Right lobe of liver (tissue), 6 donors: ENCODE measurements at regions of chr9 and their contacts with region 1.

Region 1: GRCh38 chr9:127503947-127504782 is 52.9 kb downstream of the LRSAM1 start:
- DNase-seq: peak; percentile 83 to 84 (median 83)
- ATAC-seq: peak; percentile 83 to 93 (median 86)
- H3K4me3 ChIP-seq: no peak overlapping the region
- H3K27ac ChIP-seq: no peak overlapping the region
- H3K4me1 ChIP-seq: no peaks in the 10 kb centered on the region
- H3K27me3 ChIP-seq: no peaks in the 10 kb centered on the region
- CTCF ChIP-seq: peak; percentile 86 to 94 (median 92)
- POLR2A ChIP-seq: no peak

Region 2: DNA sequence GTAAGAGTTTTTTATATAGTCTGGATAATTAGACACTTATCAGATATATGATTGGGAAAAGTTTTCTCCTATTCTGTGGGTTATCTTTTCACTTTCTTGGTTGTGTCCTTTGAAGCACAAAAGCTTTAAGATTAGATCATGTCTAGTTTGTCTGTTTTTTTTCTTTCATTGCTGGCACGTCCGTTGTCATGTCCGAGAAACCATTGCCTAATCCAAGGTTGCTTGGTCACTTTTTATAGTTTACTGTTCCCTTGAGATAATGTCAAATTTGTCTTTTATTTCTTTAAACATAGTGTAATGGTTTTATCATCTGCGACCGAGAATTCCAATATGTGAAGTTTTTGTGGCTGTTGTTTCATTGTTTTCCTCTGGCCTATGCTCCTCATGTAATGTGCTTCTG is 210.8 kb before region 1 on chr9:
- intact Hi-C with region 1: no loop called
- DNase-seq: no peak
- ATAC-seq: peak; percentile 19 to 56 (median 44)
- H3K4me3 ChIP-seq: no peak overlapping the region
- H3K27ac ChIP-seq: peak overlapping the region; percentile 2 to 68 (median 50)
- H3K4me1 ChIP-seq: peaks cover 0 to 20% (median 9%) of the 10 kb centered on the region in 4 donors
- H3K27me3 ChIP-seq: no peaks in the 10 kb centered on the region
- CTCF ChIP-seq: no peak
- POLR2A ChIP-seq: no peak

Region 3: GRCh38 chr9:127586537-127586936 is 82.4 kb after region 1 on chr9:
- intact Hi-C with region 1: loop called (anchors 5 kb)
- DNase-seq: peak; percentile 73 to 82 (median 75)
- ATAC-seq: peak; percentile 91 to 95 (median 94)
- H3K4me3 ChIP-seq: no peak overlapping the region
- H3K27ac ChIP-seq: no peak overlapping the region
- H3K4me1 ChIP-seq: peaks cover 0 to 4% (median under 1%) of the 10 kb centered on the region in 4 donors
- H3K27me3 ChIP-seq: no peaks in the 10 kb centered on the region
- CTCF ChIP-seq: peak; percentile 81 to 89 (median 84)
- POLR2A ChIP-seq: no peak

Region 4: DNA sequence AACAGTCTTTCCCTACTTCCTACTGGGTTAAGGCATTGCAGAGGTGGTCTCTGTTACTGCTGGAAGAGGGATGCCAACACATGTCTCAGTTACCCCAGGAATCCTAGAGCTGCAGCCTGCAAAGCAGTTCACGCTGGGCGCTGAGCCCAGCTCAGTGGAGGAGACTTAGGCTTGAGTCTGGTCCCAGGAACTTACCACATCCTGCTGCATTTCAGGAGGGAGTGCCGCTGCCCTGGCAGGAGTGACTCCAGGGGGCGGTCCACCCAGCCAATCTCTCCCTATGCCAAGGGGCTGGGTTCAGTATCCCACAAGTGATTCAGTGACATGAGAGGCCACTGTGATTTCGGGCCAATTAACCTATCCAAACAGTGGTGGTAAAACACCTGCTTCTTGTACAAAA is 219.3 kb after region 1 on chr9:
- intact Hi-C with region 1: loop called in 1 of 2 experiments (anchors 10 kb)
- DNase-seq: no peak
- ATAC-seq: no peak
- H3K4me3 ChIP-seq: no peak overlapping the region
- H3K27ac ChIP-seq: no peak overlapping the region
- H3K4me1 ChIP-seq: no peaks in the 10 kb centered on the region
- H3K27me3 ChIP-seq: no peaks in the 10 kb centered on the region
- CTCF ChIP-seq: no peak
- POLR2A ChIP-seq: no peak

Region 5: GRCh38 chr9:127754099-127755050 is 250.2 kb after region 1 on chr9:
- intact Hi-C with region 1: loop called in 1 of 2 experiments (anchors 10 kb)
- DNase-seq: no peak
- ATAC-seq: peak in 3 of 4 donors; percentile 6 to 34 (median 21)
- H3K4me3 ChIP-seq: no peak overlapping the region
- H3K27ac ChIP-seq: no peak overlapping the region
- H3K4me1 ChIP-seq: no peaks in the 10 kb centered on the region
- H3K27me3 ChIP-seq: no peaks in the 10 kb centered on the region
- CTCF ChIP-seq: no peak
- POLR2A ChIP-seq: no peak

Region 6: GRCh38 chr9:127921557-127922120 is 417.5 kb after region 1 on chr9:
- intact Hi-C with region 1: loop called in 1 of 2 experiments (anchors 10 kb)
- DNase-seq: peak; percentile 76 to 81 (median 77)
- ATAC-seq: peak; percentile 44 to 54 (median 52)
- H3K4me3 ChIP-seq: peak overlapping the region in 1 of 3 donors; percentile 21
- H3K27ac ChIP-seq: no peak overlapping the region
- H3K4me1 ChIP-seq: peaks cover 0 to 29% (median 3%) of the 10 kb centered on the region in 4 donors
- H3K27me3 ChIP-seq: no peaks in the 10 kb centered on the region
- CTCF ChIP-seq: peak; percentile 96 to 98 (median 97)
- POLR2A ChIP-seq: no peak